ENCODE measurements at regions of chr1 and their contacts with region 1.

Region 1: DNA sequence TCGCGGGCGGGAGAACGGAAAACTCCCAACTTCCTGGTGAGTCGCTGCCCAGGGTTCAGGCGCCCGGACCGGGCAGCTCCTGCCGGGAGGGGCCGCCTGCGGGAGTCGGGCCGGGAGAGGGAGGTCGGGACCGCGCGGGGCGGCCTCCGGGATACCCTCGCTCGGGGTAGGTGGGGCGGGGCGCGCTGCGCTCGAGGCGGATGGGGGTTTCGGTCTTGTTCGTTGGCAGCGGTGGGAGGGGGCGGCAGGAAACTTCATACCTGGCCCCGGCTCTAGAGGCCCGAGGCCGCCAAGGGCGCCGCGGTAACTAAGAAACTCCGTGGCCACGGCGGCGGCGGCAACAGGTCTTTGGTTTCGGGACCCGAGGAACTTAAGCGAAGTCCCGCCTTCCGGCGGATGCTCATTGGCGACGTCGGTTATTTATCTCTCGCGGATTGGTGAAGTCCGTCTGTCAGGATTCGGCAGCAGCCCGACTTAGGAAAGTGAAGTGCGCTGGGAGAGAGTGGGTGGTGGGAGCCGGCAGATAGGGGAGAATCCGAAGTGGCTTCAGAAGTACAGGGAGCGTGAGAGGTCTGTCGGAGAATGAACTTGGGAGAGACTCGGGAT is 546 bp downstream of the NEK7 start:
- DNase-seq: peak; percentile 90
- ATAC-seq: peak; percentile 51
- H3K4me3 ChIP-seq: peak overlapping the region; percentile 64 to 97 (median 87)
- H3K4me3 Mint-ChIP-seq: peak overlapping the region; percentile 99
- H3K27ac ChIP-seq: peak overlapping the region; percentile 88 to 95
- H3K27ac Mint-ChIP-seq: peak overlapping the region; percentile 97
- H3K4me1 ChIP-seq: peaks cover 24 to 36% of the 10 kb centered on the region in 2 donors
- H3K4me1 Mint-ChIP-seq: peaks cover 41% of the 10 kb centered on the region
- H3K27me3 ChIP-seq: no peaks in the 10 kb centered on the region
- H3K27me3 Mint-ChIP-seq: no peaks in the 10 kb centered on the region
- CTCF ChIP-seq: no peak

Region 2: DNA sequence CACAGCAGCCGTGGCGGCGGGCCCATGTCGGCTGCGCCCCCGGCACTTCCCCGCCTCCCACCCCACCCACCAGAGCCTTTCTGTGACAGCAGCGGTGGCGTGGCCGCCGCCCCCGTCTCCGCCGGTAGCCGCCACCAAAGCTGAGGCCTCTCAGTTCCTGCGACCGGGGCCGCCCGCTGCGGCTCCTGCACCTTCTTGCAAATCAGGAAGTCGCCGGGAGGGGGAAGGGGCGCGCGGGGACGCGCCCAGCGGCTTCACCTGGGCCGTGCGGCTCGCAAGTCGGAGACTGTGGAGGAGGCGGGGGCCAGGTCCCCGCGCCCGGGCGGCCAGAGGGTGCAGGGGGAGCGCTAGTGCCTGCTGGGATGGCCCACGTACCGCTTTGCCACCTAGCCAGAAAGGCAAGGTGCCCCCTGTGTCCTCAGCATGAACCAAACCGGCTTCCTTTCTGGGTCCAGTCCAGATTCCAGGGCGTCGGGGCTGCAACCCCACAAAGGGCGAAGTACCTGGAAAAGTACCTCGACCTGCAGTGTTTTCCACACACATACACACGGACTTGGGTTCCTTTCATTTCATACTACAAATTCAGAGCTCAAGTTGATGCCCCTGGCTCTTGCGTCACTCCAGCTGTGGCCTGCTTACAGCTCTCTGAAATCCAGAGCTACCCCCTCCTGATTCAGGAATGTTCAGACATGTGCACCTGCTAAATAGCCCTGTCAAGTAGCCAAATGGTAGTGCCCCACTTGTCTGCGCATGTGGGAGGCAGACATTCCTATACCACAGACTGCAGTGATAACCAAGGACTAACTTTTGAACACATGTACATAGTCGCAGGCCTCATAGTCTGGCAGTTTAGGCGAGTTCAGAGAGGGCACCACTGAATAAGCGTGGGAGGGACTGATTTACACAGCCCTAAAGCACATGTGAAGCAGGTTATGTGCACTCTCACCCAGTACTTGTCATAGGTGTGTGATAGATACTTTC is 381.8 kb before region 1 on chr1 and contains the start of gene DENND1B:
- CTCF ChIA-PET with region 1: no interaction called
- POLR2A ChIA-PET with region 1: no interaction called
- intact Hi-C with region 1: loop called (anchors 5 kb)
- DNase-seq: peak; percentile 90
- ATAC-seq: peak; percentile 74
- H3K4me3 ChIP-seq: peak within 1 kb of the TSS; percentile 55 to 78 (median 67)
- H3K4me3 Mint-ChIP-seq: peak within 1 kb of the TSS; percentile 89
- H3K27ac ChIP-seq: peak within 1 kb of the TSS; percentile 86 to 89
- H3K27ac Mint-ChIP-seq: peak within 1 kb of the TSS; percentile 99
- H3K4me1 ChIP-seq: peaks cover 28 to 47% of the 10 kb centered on the region in 2 donors
- H3K4me1 Mint-ChIP-seq: peaks cover 68% of the 10 kb centered on the region
- H3K27me3 ChIP-seq: no peaks in the 10 kb centered on the region
- H3K27me3 Mint-ChIP-seq: no peaks in the 10 kb centered on the region
- CTCF ChIP-seq: peak; percentile 15
- total RNA-seq, gene DENND1B: 24.8 and 25.4 TPM in 2 replicates

Region 3: GRCh38 chr1:198072177-198072576 is 85.2 kb before region 1 on chr1:
- CTCF ChIA-PET with region 1: no interaction called
- POLR2A ChIA-PET with region 1: no interaction called
- intact Hi-C with region 1: no loop called
- DNase-seq: no peak
- ATAC-seq: no peak
- H3K4me3 ChIP-seq: no peak overlapping the region
- H3K4me3 Mint-ChIP-seq: no peak overlapping the region
- H3K27ac ChIP-seq: no peak overlapping the region
- H3K27ac Mint-ChIP-seq: no peak overlapping the region
- H3K4me1 ChIP-seq: no peaks in the 10 kb centered on the region
- H3K4me1 Mint-ChIP-seq: no peaks in the 10 kb centered on the region
- H3K27me3 ChIP-seq: peaks cover 0 to 7% (median 0%) of the 10 kb centered on the region in 4 experiments
- H3K27me3 Mint-ChIP-seq: peaks cover 43% of the 10 kb centered on the region
- CTCF ChIP-seq: no peak

Region 4: DNA sequence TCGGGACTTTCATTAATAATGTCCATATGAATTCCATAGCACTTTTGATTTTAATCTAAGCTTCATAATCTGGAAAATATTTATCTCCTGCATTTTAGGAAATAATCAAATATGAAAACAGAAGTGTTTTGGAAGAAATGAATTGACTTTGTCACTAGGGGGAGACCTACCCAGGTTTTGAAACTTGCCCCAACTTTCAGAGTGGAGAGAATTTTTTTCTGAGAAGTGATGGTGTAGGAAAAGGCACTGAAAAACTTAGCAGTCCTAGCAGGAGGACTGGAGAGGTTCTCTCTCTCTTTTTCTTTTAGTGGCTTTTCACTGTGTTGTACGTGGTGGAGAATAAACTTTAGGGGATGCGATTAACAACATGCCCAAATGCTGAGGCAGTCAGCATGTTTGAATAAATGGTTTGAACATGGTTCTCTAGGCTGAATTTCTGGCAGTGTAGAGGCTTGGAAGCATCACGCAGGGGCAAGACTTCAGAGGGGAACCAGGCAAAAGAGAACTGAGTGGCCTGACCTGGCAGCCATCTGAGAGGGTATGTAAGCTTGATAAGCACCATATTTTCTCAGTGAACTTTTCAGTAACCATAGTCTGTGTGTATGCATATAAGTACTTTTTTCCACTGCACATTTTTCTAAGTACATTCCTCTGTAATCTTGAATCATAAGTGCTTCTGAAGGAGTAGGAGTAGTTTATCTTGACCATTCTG is 68.8 kb before region 1 on chr1:
- CTCF ChIA-PET with region 1: no interaction called
- POLR2A ChIA-PET with region 1: no interaction called
- intact Hi-C with region 1: loop called (anchors 2 kb)
- DNase-seq: peak; percentile 38
- ATAC-seq: no peak
- H3K4me3 ChIP-seq: no peak overlapping the region
- H3K4me3 Mint-ChIP-seq: no peak overlapping the region
- H3K27ac ChIP-seq: no peak overlapping the region
- H3K27ac Mint-ChIP-seq: no peak overlapping the region
- H3K4me1 ChIP-seq: no peaks in the 10 kb centered on the region
- H3K4me1 Mint-ChIP-seq: no peaks in the 10 kb centered on the region
- H3K27me3 ChIP-seq: no peaks in the 10 kb centered on the region
- H3K27me3 Mint-ChIP-seq: peaks cover 13% of the 10 kb centered on the region
- CTCF ChIP-seq: peak; percentile 79

Region 5: DNA sequence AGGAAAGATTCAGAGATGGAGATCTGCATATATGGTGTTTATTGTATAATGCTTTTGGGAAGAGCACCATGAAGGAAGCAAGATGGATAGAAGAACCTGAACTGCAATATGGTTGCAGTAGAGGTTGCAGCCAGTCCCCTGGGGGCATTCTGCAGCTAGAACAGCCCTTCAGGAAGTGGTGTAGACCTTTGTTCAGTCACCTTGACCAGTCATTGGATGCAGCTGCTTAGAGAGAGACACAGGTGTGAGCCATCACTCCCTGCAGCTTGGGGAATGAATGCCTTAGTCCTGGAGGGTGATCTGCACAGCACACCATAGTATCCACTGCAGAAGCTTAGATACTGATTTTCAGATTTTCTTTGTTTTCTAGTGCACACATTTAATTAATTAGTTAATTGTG is 41.8 kb after region 1 on chr1:
- CTCF ChIA-PET with region 1: no interaction called
- POLR2A ChIA-PET with region 1: no interaction called
- intact Hi-C with region 1: loop called (anchors 10 kb)
- DNase-seq: peak; percentile 18
- ATAC-seq: peak; percentile 88
- H3K4me3 ChIP-seq: no peak overlapping the region
- H3K4me3 Mint-ChIP-seq: no peak overlapping the region
- H3K27ac ChIP-seq: no peak overlapping the region
- H3K27ac Mint-ChIP-seq: no peak overlapping the region
- H3K4me1 ChIP-seq: peaks cover 15 to 27% of the 10 kb centered on the region in 2 donors
- H3K4me1 Mint-ChIP-seq: peaks cover 66% of the 10 kb centered on the region
- H3K27me3 ChIP-seq: no peaks in the 10 kb centered on the region
- H3K27me3 Mint-ChIP-seq: no peaks in the 10 kb centered on the region
- CTCF ChIP-seq: no peak

Region 6: DNA sequence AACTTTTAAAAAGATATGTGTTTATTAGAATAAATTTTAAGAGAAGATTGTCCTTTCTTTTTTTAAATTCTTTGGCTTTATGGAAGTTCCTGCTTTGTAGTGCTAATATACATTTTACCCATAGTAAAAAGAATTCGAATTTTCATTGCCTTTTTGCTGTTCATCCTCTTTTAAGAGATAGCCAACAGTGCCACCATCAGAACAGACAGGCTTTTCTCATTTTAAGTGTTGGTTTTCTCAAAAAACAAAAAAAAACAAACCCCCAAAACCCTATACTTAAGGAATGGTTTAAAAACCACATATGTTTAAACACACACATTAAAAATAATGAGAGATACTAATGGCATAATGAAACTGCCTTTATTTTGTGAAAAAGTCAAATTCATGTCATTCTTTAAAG is 118.3 kb after region 1 on chr1:
- CTCF ChIA-PET with region 1: interaction called, 13 read pairs
- POLR2A ChIA-PET with region 1: no interaction called
- intact Hi-C with region 1: no loop called
- DNase-seq: no peak
- ATAC-seq: no peak
- H3K4me3 ChIP-seq: no peak overlapping the region
- H3K4me3 Mint-ChIP-seq: no peak overlapping the region
- H3K27ac ChIP-seq: no peak overlapping the region
- H3K27ac Mint-ChIP-seq: no peak overlapping the region
- H3K4me1 ChIP-seq: no peaks in the 10 kb centered on the region
- H3K4me1 Mint-ChIP-seq: no peaks in the 10 kb centered on the region
- H3K27me3 ChIP-seq: no peaks in the 10 kb centered on the region
- H3K27me3 Mint-ChIP-seq: no peaks in the 10 kb centered on the region
- CTCF ChIP-seq: no peak

Region 7: GRCh38 chr1:198298640-198299039 is 141.3 kb after region 1 on chr1:
- CTCF ChIA-PET with region 1: no interaction called
- POLR2A ChIA-PET with region 1: no interaction called
- intact Hi-C with region 1: no loop called
- DNase-seq: no peak
- ATAC-seq: no peak
- H3K4me3 ChIP-seq: no peak overlapping the region
- H3K4me3 Mint-ChIP-seq: no peak overlapping the region
- H3K27ac ChIP-seq: no peak overlapping the region
- H3K27ac Mint-ChIP-seq: no peak overlapping the region
- H3K4me1 ChIP-seq: no peaks in the 10 kb centered on the region
- H3K4me1 Mint-ChIP-seq: no peaks in the 10 kb centered on the region
- H3K27me3 ChIP-seq: no peaks in the 10 kb centered on the region
- H3K27me3 Mint-ChIP-seq: no peaks in the 10 kb centered on the region
- CTCF ChIP-seq: no peak

Measured in B cell (primary cell).